ENCODE measurements at regions of chr9 and their contacts with region 1.

Region 1: DNA sequence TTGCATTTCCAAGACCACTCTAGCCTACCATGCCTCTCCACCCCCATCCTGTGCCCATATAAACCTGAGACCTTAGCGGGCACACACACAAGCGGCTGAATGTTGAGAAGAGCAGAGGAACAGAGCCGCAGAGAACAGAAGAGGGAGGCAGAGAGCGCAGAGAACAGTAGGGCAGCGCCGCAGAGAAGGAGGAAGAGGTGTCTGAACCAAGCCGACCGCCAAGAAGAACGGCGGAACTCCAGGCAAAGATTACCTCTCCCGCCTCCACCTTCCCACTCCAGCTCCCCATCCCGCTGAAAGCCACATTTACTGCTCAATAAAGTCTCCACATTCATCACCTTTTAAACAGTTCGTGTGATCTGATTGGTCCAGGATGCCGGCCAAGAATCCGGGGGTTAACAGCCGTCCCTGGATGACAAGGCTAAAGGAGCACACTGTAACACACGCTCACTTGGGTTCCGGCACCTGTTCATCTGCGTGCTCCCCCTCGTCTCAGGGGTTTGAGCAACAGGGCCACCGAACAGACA is 33.2 kb downstream of the GRIN3A start:
- DNase-seq: no peak
- ATAC-seq: peak; percentile 31; the same call in 1 of the 3 replicates
- H3K4me3 ChIP-seq: no peak overlapping the region
- H3K27ac ChIP-seq: no peak overlapping the region
- H3K4me1 ChIP-seq: no peaks in the 10 kb centered on the region
- H3K27me3 ChIP-seq: no peaks in the 10 kb centered on the region
- CTCF ChIP-seq: no peak
- EP300 ChIP-seq: no peak
- POLR2A ChIP-seq: no peak
- RAD21 ChIP-seq: no peak

Region 2: GRCh38 chr9:100739681-100740080 is 965.5 kb before region 1 on chr9:
- CTCF ChIA-PET with region 1: no interaction called
- POLR2A ChIA-PET with region 1: no interaction called
- in situ Hi-C with region 1: loop called (anchors 25 kb)
- intact Hi-C with region 1: no loop called
- DNase-seq: no peak
- ATAC-seq: no peak
- H3K4me3 ChIP-seq: no peak overlapping the region
- H3K27ac ChIP-seq: no peak overlapping the region
- H3K4me1 ChIP-seq: no peaks in the 10 kb centered on the region
- H3K27me3 ChIP-seq: no peaks in the 10 kb centered on the region
- CTCF ChIP-seq: no peak
- EP300 ChIP-seq: no peak
- POLR2A ChIP-seq: no peak
- RAD21 ChIP-seq: no peak

Region 3: DNA sequence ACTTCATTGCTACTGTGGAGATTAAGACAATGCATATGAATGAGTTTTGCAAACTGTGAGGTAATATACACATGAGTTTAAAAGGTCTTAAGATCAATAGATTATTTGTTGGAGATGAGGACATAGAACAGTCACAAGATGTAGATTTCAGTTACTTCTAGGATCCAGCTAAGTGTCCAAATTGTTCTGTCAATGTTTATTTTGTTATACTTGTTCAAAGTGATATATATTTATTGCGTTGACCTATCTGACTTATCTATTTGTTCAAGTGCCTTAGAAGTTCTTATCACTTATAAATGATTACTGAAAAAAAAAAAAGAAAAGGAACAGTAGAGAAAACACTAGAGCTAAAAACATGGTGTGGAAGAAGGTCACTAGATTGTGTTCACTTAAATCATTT is 108.9 kb after region 1 on chr9:
- CTCF ChIA-PET with region 1: no interaction called
- POLR2A ChIA-PET with region 1: no interaction called
- in situ Hi-C with region 1: no loop called
- intact Hi-C with region 1: no loop called
- DNase-seq: no peak
- ATAC-seq: no peak
- H3K4me3 ChIP-seq: no peak overlapping the region
- H3K27ac ChIP-seq: no peak overlapping the region
- H3K4me1 ChIP-seq: no peaks in the 10 kb centered on the region
- H3K27me3 ChIP-seq: no peaks in the 10 kb centered on the region
- CTCF ChIP-seq: no peak
- EP300 ChIP-seq: no peak
- POLR2A ChIP-seq: no peak
- RAD21 ChIP-seq: no peak